Aorta (tissue), 5 donors: ENCODE measurements at regions of chrX and their contacts with region 1.

Region 1: GRCh38 chrX:76279000-76279399 is 106.1 kb downstream of the PBDC1 start:
- DNase-seq: no peak
- ATAC-seq: no peak
- H3K4me3 ChIP-seq: no peak overlapping the region
- H3K27ac ChIP-seq: no peak overlapping the region
- H3K4me1 ChIP-seq: no peaks in the 10 kb centered on the region
- H3K27me3 ChIP-seq: no peaks in the 10 kb centered on the region

Region 2: DNA sequence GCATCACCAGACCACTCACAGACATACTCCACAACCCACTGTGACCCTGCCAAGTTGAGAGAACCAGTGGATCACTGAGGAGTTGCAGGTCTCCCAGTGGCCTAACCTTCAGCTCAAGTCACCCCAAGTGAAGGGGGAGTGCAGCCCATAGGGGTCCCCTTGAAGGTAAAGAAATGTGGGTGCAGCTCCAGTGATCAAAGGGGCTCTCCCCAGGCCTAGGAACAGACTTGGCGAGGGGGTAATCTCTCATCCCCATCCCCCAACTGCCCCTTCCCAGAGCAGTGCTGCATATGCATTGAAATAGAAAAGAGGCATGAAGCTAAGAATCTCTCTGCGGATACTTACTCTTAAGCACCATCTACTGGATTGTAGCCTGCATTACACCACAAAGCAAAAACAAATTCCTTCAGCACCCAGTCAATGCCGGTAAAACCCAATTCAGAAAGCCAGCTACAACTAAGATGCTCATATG is 175.5 kb after region 1 on chrX:
- intact Hi-C with region 1: loop called in 1 of 2 experiments (anchors 2 kb)
- DNase-seq: no peak
- ATAC-seq: no peak
- H3K4me3 ChIP-seq: no peak overlapping the region
- H3K27ac ChIP-seq: no peak overlapping the region
- H3K4me1 ChIP-seq: no peaks in the 10 kb centered on the region
- H3K27me3 ChIP-seq: no peaks in the 10 kb centered on the region